Activated CD4-positive, alpha-beta T cell treated with anti-CD3 and anti-CD28 coated beads, Interleukin-2, amount 10 ng/mL, durations not matched to agents 24 days and 14 days (primary cell): ENCODE measurements at regions of chr6 and their contacts with region 1.

Region 1: DNA sequence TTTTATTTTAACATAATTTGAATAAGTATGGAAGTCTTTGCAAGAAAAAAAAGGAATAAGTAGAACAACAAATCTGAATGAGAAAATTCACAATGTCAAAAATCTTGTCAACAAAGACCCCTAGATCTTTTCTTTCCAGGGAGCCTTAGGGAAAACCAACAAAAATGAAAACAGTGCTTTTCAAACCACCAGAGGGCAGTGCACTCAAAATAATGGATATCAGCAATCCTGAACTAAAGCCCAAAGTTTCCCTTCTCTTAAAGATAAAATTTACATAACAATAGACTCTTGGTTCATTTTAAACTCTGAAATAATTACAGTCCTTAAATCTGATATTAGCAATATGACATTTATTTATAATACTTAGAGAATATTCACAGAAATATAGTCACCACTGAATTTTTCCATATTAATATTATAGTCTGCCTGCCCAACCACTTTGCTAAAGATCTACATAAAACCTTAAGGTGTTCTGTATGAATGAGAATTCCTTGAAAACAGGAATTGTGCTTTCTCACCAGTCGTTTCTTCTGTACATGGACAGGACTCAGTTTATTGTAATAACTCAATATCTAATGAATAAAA is 105.3 kb upstream of the BMP5 start:
- DNase-seq: no peak
- H3K4me3 Mint-ChIP-seq: no peak overlapping the region
- H3K27ac Mint-ChIP-seq: no peak overlapping the region
- H3K4me1 Mint-ChIP-seq: no peaks in the 10 kb centered on the region
- H3K27me3 Mint-ChIP-seq: no peaks in the 10 kb centered on the region

Region 2: GRCh38 chr6:56292505-56293181 is 311.9 kb after region 1 on chr6:
- intact Hi-C with region 1: loop called (anchors 10 kb)
- DNase-seq: no peak
- H3K4me3 Mint-ChIP-seq: no peak overlapping the region
- H3K27ac Mint-ChIP-seq: no peak overlapping the region
- H3K4me1 Mint-ChIP-seq: no peaks in the 10 kb centered on the region
- H3K27me3 Mint-ChIP-seq: peaks cover 3% of the 10 kb centered on the region

Region 3: DNA sequence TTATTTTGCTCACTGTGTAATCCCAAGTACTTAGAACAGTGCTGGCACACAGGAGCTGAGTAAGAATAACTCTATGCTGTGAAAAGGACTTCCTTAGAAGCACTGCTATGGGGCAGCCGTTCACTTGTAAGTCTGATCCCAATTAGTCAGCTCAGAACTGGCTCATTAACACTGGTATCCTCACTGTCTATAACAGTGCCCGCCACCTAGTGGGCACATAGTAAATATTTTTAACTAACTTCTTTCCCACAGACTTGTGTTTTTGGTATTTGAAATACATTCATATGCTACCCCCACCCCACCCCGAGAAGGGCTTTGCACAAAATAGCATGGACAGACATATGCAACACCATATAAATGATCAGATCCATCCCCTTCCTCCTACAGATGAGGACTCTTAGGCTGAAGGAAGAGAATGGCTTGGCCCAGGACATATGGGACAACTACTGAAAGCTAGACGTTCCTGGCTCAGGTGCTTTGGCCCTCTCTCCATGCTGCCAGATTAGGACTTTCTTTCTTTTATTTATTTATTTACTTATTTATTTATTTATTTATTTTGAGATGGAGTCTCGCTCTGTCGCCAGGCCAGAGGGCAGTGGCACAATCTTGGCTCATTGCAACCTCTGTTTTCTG is 614.9 kb after region 1 on chr6:
- intact Hi-C with region 1: loop called (anchors 10 kb)
- DNase-seq: peak; percentile 79
- H3K4me3 Mint-ChIP-seq: no peak overlapping the region
- H3K27ac Mint-ChIP-seq: peak overlapping the region; percentile 2
- H3K4me1 Mint-ChIP-seq: peaks cover 26% of the 10 kb centered on the region
- H3K27me3 Mint-ChIP-seq: no peaks in the 10 kb centered on the region